Dorsolateral prefrontal cortex (tissue), 120 donors: ENCODE measurements at regions of chr5 and their contacts with region 1.

Region 1: GRCh38 chr5:1641560-1642166 is 117.9 kb upstream of the LPCAT1 start:
- DNase-seq: peak; percentile 72 to 94 (median 86)
- H3K4me3 ChIP-seq: peak overlapping the region in 12 of 59 donors; percentile 0 to 43 (median 10)
- H3K27ac ChIP-seq: peak overlapping the region in 11 of 59 donors; percentile 17 to 69 (median 53)
- H3K27me3 ChIP-seq: peaks cover 0 to 29% (median 13%) of the 10 kb centered on the region in 45 donors
- CTCF ChIP-seq: peak; percentile 44 to 95 (median 86)

Region 2: GRCh38 chr5:923281-923873 is 718.3 kb before region 1 on chr5:
- intact Hi-C with region 1: loop called (anchors 5 to 10 kb)
- DNase-seq: peak in 8 of 10 donors; percentile 35 to 76 (median 57)
- H3K4me3 ChIP-seq: no peak overlapping the region
- H3K27ac ChIP-seq: no peak overlapping the region
- H3K27me3 ChIP-seq: peaks cover 0 to 43% (median 22%) of the 10 kb centered on the region in 45 donors
- CTCF ChIP-seq: peak in 55 of 56 donors; percentile 48 to 89 (median 74)

Region 3: DNA sequence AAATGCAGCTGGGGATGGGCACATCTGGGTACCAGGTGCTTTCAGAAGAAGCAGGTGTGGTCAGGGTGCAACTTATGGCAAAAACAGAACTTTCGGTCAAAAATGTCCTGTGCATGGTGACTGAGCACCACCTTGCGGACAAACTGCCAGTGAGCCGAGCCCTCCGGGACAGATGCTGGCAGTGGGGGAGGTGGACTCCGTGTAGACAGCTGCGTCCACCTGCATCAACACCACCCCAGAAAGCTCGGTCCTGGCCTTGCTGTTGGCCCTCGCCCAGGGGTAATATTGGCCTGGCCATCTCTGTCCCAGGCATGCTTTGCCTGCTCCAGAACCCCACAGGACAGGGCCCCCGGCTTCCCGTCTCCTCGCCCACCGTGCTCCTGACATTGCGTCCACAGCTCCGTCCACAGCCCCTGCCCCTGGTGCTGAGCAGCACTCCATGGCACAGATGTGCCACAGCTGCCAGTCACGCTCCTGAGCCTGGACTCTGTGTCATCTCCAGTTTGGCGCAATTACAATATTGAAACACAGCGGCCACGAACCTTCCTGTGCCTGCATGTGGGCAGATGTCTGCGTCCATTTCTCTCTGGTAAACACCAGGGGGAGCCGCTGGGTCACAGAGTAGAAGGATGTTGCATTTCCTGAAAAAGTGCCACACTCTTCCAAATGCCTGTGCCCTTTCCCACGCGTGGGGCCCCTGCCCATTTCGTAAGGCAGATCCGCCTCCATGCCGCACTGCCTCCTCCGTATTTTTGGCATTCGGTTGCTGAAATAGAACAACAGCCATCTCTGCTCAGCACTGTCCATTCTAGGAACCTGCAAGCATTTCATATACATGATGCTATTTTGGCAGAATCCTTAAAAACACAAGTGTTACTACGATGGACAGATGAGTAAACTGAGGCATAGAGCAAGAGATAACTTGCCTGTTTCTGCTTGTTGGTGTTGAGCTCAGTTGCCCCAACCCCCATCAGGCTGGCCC is 473.6 kb before region 1 on chr5:
- intact Hi-C with region 1: loop called (anchors 5 kb)
- DNase-seq: peak; percentile 54 to 82 (median 78)
- H3K4me3 ChIP-seq: peak overlapping the region in 49 of 59 donors; percentile 6 to 60 (median 33)
- H3K27ac ChIP-seq: no peak overlapping the region
- H3K27me3 ChIP-seq: peaks cover 0 to 6% (median 0%) of the 10 kb centered on the region in 45 donors
- CTCF ChIP-seq: peak; percentile 39 to 91 (median 78)

Region 4: DNA sequence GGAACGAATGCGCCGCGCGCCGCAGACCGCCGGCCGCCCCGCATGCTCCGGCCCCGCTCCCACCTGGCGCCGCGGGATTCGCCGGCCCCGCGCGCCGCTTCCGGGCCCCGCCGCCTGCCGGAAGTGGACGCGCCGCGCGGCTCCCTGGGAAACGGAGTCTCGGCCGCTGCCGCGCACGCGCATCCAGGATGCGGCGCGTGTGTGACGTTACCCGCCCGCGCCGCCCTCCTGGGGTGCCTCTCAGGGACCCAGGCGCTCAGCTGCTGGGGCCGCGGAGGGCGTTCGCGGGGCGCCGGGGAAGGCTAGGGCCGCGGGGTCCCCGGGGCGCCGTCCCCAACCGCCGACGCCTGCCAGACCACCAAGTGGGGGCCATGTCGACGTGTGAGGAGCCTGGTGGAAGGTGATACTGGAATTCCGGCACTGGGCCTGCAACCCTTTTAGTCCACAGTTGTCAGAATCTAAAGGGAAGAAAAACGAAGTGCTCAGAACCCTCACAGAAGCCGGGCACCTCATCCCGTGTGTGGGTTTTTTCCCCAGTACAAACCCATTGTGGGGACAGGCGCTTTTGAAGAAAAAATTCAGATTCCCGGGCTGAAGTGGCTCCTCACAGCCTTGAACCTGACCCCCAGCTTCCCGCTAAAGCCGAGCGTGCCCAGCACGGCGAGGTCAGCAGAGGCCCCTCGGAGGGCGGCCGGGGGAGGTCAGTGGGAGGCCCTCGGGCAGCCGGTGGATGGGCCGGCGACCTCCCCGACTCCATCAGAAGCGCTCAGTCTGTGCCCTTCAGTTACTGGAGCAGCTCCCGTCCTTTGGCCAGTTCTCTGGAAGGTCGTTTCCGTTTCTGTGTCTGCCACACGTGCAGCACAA is 296.5 kb before region 1 on chr5 and contains the start of gene CLPTM1L:
- intact Hi-C with region 1: loop called in 1 of 2 experiments (anchors 10 kb)
- DNase-seq: peak; percentile 57 to 92 (median 70)
- H3K4me3 ChIP-seq: peak within 1 kb of the TSS; percentile 62 to 100 (median 96)
- H3K27ac ChIP-seq: peak within 1 kb of the TSS in 57 of 59 donors; percentile 24 to 94 (median 85)
- H3K27me3 ChIP-seq: no peaks in the 10 kb centered on the region
- CTCF ChIP-seq: peak in 23 of 56 donors; percentile 7 to 60 (median 22)
- total RNA-seq, gene CLPTM1L: 43.0 to 76.3 (median 58.2) TPM

Region 5: GRCh38 chr5:1374680-1375055 is 267.0 kb before region 1 on chr5:
- intact Hi-C with region 1: loop called in 1 of 2 experiments (anchors 5 kb)
- DNase-seq: peak in 2 of 10 donors; percentile 27 to 94
- H3K4me3 ChIP-seq: no peak overlapping the region
- H3K27ac ChIP-seq: no peak overlapping the region
- H3K27me3 ChIP-seq: peaks cover 0 to 12% (median 0%) of the 10 kb centered on the region in 45 donors
- CTCF ChIP-seq: no peak

Region 6: DNA sequence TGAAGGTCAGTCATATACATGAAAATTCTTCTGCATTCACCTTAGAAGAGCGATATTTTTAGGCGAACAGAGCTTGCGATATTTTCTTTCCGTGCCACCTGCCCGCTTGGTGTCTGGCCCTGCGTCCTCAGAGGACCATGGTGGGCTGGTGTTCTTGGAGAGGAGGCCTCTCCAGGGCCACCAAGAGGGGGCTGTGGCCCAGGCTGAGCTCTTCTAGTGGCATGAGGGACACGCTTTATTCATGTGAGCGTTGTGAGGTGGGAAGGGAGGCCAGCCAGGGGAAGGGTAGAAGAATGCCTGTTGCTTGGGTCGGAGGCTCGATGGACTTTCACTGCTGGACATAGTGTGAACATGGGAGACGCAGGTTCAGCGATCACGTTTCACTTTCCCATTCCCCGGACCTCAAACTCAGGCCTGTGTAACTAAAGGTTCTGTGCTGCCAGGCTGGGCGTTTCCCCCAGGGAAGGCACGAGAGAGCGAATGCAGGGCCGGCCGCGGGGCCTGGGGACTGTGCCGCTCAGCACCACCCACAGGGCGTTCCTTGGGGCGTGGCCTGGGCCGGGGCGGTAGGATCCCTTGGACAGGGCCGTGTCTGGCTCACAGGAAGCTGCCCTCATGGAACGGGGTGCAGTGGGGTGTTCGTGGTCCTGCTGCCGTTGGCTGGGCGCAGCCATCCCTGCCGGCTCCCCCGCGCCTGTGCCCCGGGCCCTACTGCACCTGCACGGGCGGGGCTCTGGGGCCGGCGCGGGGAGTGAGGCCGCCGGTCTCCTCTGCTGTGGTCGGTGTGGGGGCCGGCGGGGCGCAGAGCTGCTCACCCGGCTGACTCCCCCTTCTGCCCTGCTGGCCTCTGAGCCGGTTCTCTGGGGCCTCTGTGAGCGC is 256.0 kb before region 1 on chr5:
- intact Hi-C with region 1: loop called in 1 of 2 experiments (anchors 10 kb)
- DNase-seq: peak; percentile 53 to 89 (median 79)
- H3K4me3 ChIP-seq: peak overlapping the region; percentile 48 to 91 (median 72)
- H3K27ac ChIP-seq: peak overlapping the region in 37 of 59 donors; percentile 12 to 83 (median 59)
- H3K27me3 ChIP-seq: peaks cover 0 to 10% (median 0%) of the 10 kb centered on the region in 45 donors
- CTCF ChIP-seq: peak in 3 of 56 donors; percentile 10 to 20 (median 12)

Region 7: GRCh38 chr5:1479581-1480188 is 162.0 kb before region 1 on chr5:
- intact Hi-C with region 1: loop called in 1 of 2 experiments (anchors 10 kb)
- DNase-seq: peak in 1 of 10 donors; percentile 34
- H3K4me3 ChIP-seq: no peak overlapping the region
- H3K27ac ChIP-seq: peak overlapping the region in 18 of 59 donors; percentile 14 to 73 (median 60)
- H3K27me3 ChIP-seq: no peaks in the 10 kb centered on the region
- CTCF ChIP-seq: peak; percentile 19 to 70 (median 56)